Posterior vena cava (tissue), 2 donors: ENCODE measurements at regions of chr3 and their contacts with region 1.

Region 1: GRCh38 chr3:37024092-37024491 is 30.8 kb downstream of the MLH1 start:
- DNase-seq: no peak

Region 2: DNA sequence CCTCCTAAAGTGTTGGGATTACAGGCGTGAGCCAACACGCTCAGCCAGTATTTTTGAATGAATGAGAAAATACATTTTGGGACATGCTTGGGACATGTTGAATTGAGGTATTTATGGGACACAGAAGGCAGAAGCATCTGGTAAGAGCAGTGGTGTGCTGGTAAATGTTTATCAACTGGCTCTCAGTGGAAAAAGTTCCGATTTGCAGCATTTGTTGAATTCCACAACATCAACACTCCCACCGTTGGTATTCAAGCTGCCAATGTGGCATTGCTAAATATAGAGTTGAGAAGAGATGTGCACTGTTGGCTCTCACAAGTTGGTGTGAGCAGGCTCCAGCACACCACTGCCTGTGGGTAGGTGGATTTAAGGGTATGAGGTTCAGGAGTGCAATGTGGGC is 186.1 kb after region 1 on chr3:
- intact Hi-C with region 1: loop called (anchors 10 kb)
- DNase-seq: no peak